ENCODE measurements at regions of chr3 and their contacts with region 1.

Region 1: GRCh38 chr3:23741036-23741703 is 64.6 kb upstream of the UBE2E1 start:
- H3K4me3 ChIP-seq: no peak overlapping the region
- H3K27ac ChIP-seq: no peak overlapping the region
- H3K4me1 ChIP-seq: peaks cover 2% of the 10 kb centered on the region; the same call in 1 of the 2 replicates
- CTCF ChIP-seq: no peak

Region 2: GRCh38 chr3:23720885-23721284 is 20.3 kb before region 1 on chr3:
- CTCF ChIA-PET with region 1: no interaction called
- POLR2A ChIA-PET with region 1: no interaction called
- H3K4me3 ChIP-seq: no peak overlapping the region
- H3K27ac ChIP-seq: no peak overlapping the region
- H3K4me1 ChIP-seq: no peaks in the 10 kb centered on the region
- CTCF ChIP-seq: no peak

Region 3: DNA sequence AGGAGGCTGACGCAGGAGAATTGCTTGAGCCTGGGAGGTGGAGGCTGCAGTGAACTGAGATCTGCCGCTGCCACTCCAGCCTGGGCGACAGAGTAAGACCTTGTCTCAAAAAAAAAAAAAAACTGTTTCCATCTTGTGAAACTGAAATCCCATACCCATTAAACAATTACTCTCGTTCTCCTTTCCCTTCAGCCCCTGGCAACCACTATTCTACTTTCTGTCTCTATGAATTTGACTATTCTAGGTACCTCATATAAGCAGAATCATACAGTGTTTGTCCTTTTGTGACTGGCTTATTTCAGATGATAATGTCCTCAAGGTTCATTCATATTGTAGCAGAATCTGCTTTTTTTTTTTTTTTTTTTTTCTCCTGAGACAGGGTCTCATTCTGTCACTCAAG is 13.0 kb after region 1 on chr3:
- CTCF ChIA-PET with region 1: interaction called, 4 read pairs
- POLR2A ChIA-PET with region 1: interaction called, 10 read pairs
- H3K4me3 ChIP-seq: no peak overlapping the region
- H3K27ac ChIP-seq: no peak overlapping the region
- H3K4me1 ChIP-seq: no peaks in the 10 kb centered on the region
- CTCF ChIP-seq: no peak